Left lung (tissue), 14 donors: ENCODE measurements at regions of chr2 and their contacts with region 1.

Region 1: GRCh38 chr2:232521959-232522622 is 1.9 kb downstream of the PRSS56 start:
- DNase-seq: peak in 2 of 4 donors; percentile 50 to 93
- ATAC-seq: peak; percentile 81
- H3K4me3 ChIP-seq: no peak overlapping the region
- H3K27ac ChIP-seq: no peak overlapping the region
- H3K4me1 ChIP-seq: peaks cover 12 to 28% of the 10 kb centered on the region in 2 donors
- H3K27me3 ChIP-seq: peaks cover 45 to 85% of the 10 kb centered on the region in 2 donors
- CTCF ChIP-seq: peak; percentile 87 to 95

Region 2: DNA sequence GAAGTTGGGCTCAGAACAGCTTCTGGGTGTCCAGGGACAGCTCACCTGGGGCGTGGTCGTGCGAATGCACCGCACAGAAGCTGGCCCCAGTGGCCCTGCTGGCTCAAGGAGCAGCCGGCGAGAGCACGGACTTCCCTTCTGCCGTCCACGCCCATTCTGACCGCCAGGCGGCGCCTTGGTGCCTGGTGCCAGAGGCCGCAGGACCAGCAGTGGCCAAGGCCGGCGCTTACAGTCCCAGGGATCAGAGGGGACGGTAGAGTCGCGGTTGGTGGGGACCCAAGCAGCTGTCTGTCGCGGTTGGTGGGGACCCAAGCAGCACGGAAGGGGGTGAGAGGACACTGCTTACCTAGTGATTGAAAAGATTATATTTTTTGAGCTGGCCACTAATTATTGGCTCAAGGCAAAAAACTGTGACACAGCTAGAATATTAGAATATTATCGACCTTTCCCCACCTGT is 621.6 kb before region 1 on chr2:
- intact Hi-C with region 1: loop called in 1 of 2 experiments (anchors 10 kb)
- DNase-seq: peak; percentile 13 to 95 (median 68)
- ATAC-seq: peak; percentile 98
- H3K4me3 ChIP-seq: no peak overlapping the region
- H3K27ac ChIP-seq: no peak overlapping the region
- H3K4me1 ChIP-seq: no peaks in the 10 kb centered on the region
- H3K27me3 ChIP-seq: peaks cover 0 to 9% of the 10 kb centered on the region in 2 donors
- CTCF ChIP-seq: peak; percentile 66 to 85

Region 3: DNA sequence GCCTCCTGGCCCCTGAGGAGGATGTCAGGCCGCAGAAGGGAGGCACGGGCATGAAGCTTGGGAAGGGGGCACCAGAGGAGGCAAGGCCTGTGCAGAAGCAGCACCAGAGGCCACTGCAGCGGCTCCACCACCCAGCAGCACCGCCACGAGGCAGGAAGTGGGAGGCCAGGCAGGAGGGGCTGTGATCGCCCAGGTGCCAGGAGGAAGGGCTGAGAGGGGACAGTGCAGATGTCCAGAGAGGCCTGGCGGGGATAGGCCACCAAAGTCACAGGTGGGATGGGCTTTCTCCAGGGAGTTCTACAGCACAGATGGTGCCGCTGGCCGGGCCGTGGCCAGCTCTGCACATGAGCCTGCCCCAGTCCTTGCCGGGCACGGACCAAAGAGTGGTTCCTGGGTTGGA is 72.1 kb before region 1 on chr2:
- intact Hi-C with region 1: loop called in 1 of 2 experiments (anchors 5 kb)
- DNase-seq: no peak
- ATAC-seq: no peak
- H3K4me3 ChIP-seq: no peak overlapping the region
- H3K27ac ChIP-seq: no peak overlapping the region
- H3K4me1 ChIP-seq: no peaks in the 10 kb centered on the region
- H3K27me3 ChIP-seq: peaks cover 0 to 3% of the 10 kb centered on the region in 2 donors
- CTCF ChIP-seq: no peak

Region 4: GRCh38 chr2:232487385-232488096 is 34.5 kb before region 1 on chr2 and contains the start of gene ECEL1:
- intact Hi-C with region 1: no loop called
- DNase-seq: peak in 1 of 4 donors; percentile 70
- ATAC-seq: no peak
- H3K4me3 ChIP-seq: no peak within 1 kb of the TSS
- H3K27ac ChIP-seq: no peak within 1 kb of the TSS
- H3K4me1 ChIP-seq: peaks cover 0 to 22% of the 10 kb centered on the region in 2 donors
- H3K27me3 ChIP-seq: peaks cover 48 to 92% of the 10 kb centered on the region in 2 donors
- CTCF ChIP-seq: no peak
- polyA plus RNA-seq, gene ECEL1: 0.24 to 0.64 (median 0.45) TPM